Right cardiac atrium (tissue), 5 donors: ENCODE measurements at regions of chr10 and their contacts with region 1.

Region 1: GRCh38 chr10:60426400-60426799 is 36.7 kb upstream of the ANK3 start:
- DNase-seq: no peak
- ATAC-seq: no peak
- H3K4me3 ChIP-seq: no peak overlapping the region
- H3K27ac ChIP-seq: no peak overlapping the region
- H3K4me1 ChIP-seq: no peaks in the 10 kb centered on the region
- H3K27me3 ChIP-seq: no peaks in the 10 kb centered on the region

Region 2: GRCh38 chr10:60192946-60193345 is 233.5 kb before region 1 on chr10:
- intact Hi-C with region 1: no loop called
- DNase-seq: no peak
- ATAC-seq: no peak
- H3K4me3 ChIP-seq: no peak overlapping the region
- H3K27ac ChIP-seq: no peak overlapping the region
- H3K4me1 ChIP-seq: peaks cover 5% of the 10 kb centered on the region
- H3K27me3 ChIP-seq: no peaks in the 10 kb centered on the region

Region 3: GRCh38 chr10:60282771-60283353 is 143.5 kb before region 1 on chr10:
- intact Hi-C with region 1: loop called in 1 of 4 experiments (anchors 10 kb)
- DNase-seq: no peak
- ATAC-seq: no peak
- H3K4me3 ChIP-seq: no peak overlapping the region
- H3K27ac ChIP-seq: no peak overlapping the region
- H3K4me1 ChIP-seq: peaks cover 3% of the 10 kb centered on the region
- H3K27me3 ChIP-seq: no peaks in the 10 kb centered on the region

Region 4: GRCh38 chr10:60299961-60300883 is 126.2 kb before region 1 on chr10:
- intact Hi-C with region 1: loop called in 1 of 4 experiments (anchors 10 kb)
- DNase-seq: peak in 2 of 3 donors; percentile 37 to 59
- ATAC-seq: peak; percentile 88 to 93
- H3K4me3 ChIP-seq: peak overlapping the region; percentile 85
- H3K27ac ChIP-seq: peak overlapping the region; percentile 71
- H3K4me1 ChIP-seq: peaks cover 6% of the 10 kb centered on the region
- H3K27me3 ChIP-seq: no peaks in the 10 kb centered on the region